ENCODE measurements at regions of chr7 and their contacts with region 1.

Region 1: GRCh38 chr7:114229246-114229645 is 185.4 kb upstream of the FOXP2 start:
- DNase-seq: no peak
- ATAC-seq: no peak
- H3K4me3 ChIP-seq: no peak overlapping the region
- H3K27ac ChIP-seq: no peak overlapping the region
- H3K4me1 ChIP-seq: no peaks in the 10 kb centered on the region
- H3K27me3 ChIP-seq: no peaks in the 10 kb centered on the region
- CTCF ChIP-seq: no peak
- EP300 ChIP-seq: no peak
- POLR2A ChIP-seq: no peak
- RAD21 ChIP-seq: no peak

Region 2: DNA sequence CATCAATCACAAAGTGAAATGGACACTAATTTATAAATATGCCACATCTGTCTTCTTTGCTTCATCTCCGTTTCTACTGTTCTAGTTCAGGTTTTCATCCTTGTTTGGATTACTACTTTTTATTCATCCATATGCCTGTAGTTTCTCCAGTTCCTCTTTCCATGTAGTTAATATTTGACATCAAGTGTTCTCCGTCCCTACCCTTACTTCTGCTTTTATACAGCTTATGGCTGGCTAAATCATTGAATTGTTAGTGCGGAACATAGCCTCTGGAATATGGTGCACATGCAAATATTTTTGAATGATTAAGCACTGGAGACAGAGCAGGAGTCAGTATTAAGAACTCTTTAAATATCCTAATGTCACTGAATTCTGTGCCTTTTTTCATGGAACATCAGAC is 80.5 kb before region 1 on chr7:
- CTCF ChIA-PET with region 1: no interaction called
- POLR2A ChIA-PET with region 1: no interaction called
- RAD21 ChIA-PET with region 1: no interaction called
- SMC1A ChIA-PET with region 1: no interaction called
- in situ Hi-C with region 1: no loop called
- intact Hi-C with region 1: loop called (anchors 1 kb)
- DNase-seq: no peak
- ATAC-seq: no peak
- H3K4me3 ChIP-seq: no peak overlapping the region
- H3K27ac ChIP-seq: no peak overlapping the region
- H3K4me1 ChIP-seq: no peaks in the 10 kb centered on the region
- H3K27me3 ChIP-seq: no peaks in the 10 kb centered on the region; a peak in 2 of 4 replicates
- CTCF ChIP-seq: no peak
- EP300 ChIP-seq: no peak
- POLR2A ChIP-seq: no peak
- RAD21 ChIP-seq: no peak

Region 3: DNA sequence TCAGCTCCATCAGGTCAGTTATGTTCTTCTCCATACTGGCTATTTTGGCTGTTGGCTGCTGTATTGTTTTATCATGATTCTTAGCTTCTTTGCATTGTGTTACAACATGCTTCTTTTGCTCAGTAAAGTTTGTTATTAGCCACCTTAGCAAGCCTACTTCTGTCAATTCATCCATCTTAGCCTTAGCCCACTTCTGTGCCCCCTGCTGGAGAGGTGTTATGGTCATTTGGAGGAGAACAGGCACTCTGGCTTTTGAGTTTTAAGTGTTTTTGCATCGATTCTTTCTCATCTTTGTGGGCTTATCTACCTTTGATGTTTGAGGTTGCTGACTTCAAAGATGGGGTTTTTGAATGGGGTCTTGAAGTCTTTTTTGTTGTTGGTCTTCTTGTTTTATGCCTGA is 19.3 kb before region 1 on chr7:
- CTCF ChIA-PET with region 1: no interaction called
- POLR2A ChIA-PET with region 1: no interaction called
- RAD21 ChIA-PET with region 1: no interaction called
- SMC1A ChIA-PET with region 1: no interaction called
- in situ Hi-C with region 1: no loop called
- intact Hi-C with region 1: no loop called
- DNase-seq: no peak
- ATAC-seq: 0 out of 3 replicates have a peak, but pooled peaks have one; percentile 21
- H3K4me3 ChIP-seq: no peak overlapping the region
- H3K27ac ChIP-seq: no peak overlapping the region
- H3K4me1 ChIP-seq: no peaks in the 10 kb centered on the region
- H3K27me3 ChIP-seq: no peaks in the 10 kb centered on the region
- CTCF ChIP-seq: 0 out of 6 replicates have a peak, but pooled peaks of 1 of the 3 experiments have one; percentile 9
- EP300 ChIP-seq: no peak
- POLR2A ChIP-seq: no peak
- RAD21 ChIP-seq: no peak

Region 4: GRCh38 chr7:114422507-114423501 is 193.6 kb after region 1 on chr7:
- CTCF ChIA-PET with region 1: no interaction called
- POLR2A ChIA-PET with region 1: no interaction called
- RAD21 ChIA-PET with region 1: no interaction called
- SMC1A ChIA-PET with region 1: no interaction called
- in situ Hi-C with region 1: no loop called
- intact Hi-C with region 1: no loop called
- DNase-seq: no peak
- ATAC-seq: peak; percentile 80
- H3K4me3 ChIP-seq: no peak overlapping the region
- H3K27ac ChIP-seq: no peak overlapping the region
- H3K4me1 ChIP-seq: no peaks in the 10 kb centered on the region
- H3K27me3 ChIP-seq: no peaks in the 10 kb centered on the region
- CTCF ChIP-seq: peak in 2 of 3 experiments; percentile 17 to 42; a peak in 3 of 6 replicates
- EP300 ChIP-seq: no peak
- POLR2A ChIP-seq: no peak
- RAD21 ChIP-seq: no peak

Measured in GM12878 (cell line).